ENCODE measurements at regions of chr3 and their contacts with region 1.

Region 1: DNA sequence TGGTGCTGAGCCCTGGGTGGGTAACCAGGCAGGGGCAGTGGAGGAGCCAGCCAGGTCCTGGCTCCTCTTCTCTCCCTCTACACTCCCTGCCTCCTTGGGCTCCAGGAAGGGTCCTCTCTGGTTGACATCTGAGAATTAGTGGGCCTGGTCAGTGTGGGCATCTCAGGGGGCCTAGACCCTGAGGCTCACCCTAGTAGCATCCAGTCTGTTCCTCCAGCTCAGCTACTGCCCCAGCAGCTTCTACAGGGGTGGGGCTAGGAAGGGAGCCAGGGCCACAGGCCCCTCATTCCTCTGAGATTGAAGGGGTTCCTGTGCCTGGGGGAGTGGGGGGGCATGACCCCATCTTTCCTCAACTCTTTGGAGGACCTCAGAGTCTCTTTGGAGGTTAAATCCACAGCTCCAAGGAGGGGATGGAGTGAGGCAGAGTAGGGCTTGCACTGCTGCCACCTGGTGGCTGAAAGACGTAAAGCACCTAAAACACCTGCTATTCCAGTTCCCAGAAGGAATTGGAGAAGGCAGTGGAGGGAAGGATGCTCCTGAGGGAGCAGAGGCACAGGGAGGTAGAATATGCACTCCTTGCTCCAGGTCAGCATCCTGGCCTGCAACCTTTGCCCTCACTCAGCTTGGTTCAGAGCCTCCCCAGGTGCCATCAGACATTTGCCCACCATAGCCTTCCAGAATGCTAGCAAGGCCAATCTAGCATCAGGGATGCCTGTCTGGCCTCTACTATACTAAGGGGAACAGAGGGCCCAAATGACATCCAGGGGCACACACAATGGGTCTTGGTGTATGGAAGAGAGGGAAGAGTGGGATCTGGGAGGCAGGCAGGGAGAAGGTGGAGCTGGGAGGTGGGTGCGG is 25.1 kb downstream of the C3orf18 start:
- DNase-seq: peak; percentile 54
- ATAC-seq: peak; percentile 71
- H3K4me3 Mint-ChIP-seq: no peak overlapping the region
- H3K27ac Mint-ChIP-seq: peak overlapping the region; percentile 41
- H3K4me1 Mint-ChIP-seq: no peaks in the 10 kb centered on the region
- H3K27me3 Mint-ChIP-seq: peaks cover 27% of the 10 kb centered on the region
- CTCF ChIP-seq: peak; percentile 90

Region 2: DNA sequence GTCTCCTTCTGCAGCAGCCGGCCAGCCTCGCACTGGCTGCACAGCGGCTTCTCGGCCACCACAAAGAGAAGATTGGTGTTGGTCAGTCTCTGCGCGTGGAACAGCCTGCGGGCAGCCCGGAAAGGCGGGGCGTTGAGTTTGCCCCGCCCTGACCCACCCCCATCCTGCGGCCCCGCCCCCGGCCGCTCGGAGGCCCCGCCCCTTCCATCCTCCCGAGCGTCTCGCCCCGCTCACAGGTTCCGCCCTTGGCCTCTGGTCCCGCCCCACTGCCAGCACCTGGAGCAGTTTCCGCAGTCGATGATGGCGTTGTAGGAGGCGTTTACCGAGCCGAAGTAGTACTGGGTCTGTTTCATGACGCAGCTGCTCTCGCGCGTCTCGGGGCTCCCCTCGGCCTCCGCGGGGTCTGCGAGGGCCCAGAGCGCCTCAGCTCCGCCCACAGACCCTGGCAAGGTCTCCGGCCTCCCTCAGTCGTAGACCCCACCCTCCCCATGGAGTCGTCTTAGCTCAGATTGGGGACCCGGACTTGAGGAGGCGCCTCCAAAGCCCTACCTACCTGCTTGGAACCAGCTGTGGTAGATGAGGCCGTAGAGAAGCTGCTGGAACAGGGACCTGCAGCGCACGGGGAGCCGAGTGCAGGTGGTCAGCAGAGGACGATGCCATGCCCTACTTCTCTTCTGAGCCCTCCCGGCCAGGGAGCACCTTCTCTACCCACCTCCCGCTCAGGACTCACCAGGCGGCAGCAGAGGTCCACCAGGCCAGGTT is 177.1 kb before region 1 on chr3:
- CTCF ChIA-PET with region 1: interaction called, 4 read pairs
- POLR2A ChIA-PET with region 1: no interaction called
- intact Hi-C with region 1: loop called (anchors 1 kb)
- DNase-seq: peak; percentile 85
- ATAC-seq: peak; percentile 97
- H3K4me3 Mint-ChIP-seq: peak overlapping the region; percentile 85
- H3K27ac Mint-ChIP-seq: peak overlapping the region; percentile 83
- H3K4me1 Mint-ChIP-seq: peaks cover 19% of the 10 kb centered on the region
- H3K27me3 Mint-ChIP-seq: peaks cover 2% of the 10 kb centered on the region
- CTCF ChIP-seq: no peak

Region 3: DNA sequence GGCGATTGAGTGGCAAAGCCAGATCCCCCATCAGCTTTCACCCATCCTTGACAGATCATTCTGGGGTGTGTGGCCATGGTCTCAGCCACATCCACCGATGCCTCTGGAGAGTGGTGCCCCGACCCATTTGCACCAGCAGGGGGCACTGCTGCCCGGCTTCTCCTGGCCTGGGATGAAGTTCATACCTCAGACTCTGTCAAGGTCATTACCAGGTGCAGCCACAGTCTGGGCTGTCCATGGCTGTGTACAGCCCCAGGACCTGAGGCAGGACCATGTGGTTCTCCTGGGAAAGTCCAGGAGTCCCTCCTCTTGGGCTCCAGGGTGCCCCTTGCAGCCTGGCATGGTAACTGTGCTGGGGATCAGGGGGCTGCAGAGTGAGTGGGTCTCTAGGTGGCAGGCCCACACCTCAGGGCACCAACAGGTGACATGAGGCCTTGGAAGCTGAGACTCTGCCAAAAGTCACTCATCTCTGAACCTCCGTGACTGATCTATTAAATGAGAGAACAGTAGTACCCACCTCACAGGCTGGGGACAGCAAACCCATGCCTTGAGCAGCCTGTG is 106.2 kb before region 1 on chr3:
- CTCF ChIA-PET with region 1: interaction called, 18 read pairs
- POLR2A ChIA-PET with region 1: no interaction called
- intact Hi-C with region 1: loop called (anchors 1 kb)
- DNase-seq: peak; percentile 64
- ATAC-seq: peak; percentile 86
- H3K4me3 Mint-ChIP-seq: no peak overlapping the region
- H3K27ac Mint-ChIP-seq: no peak overlapping the region
- H3K4me1 Mint-ChIP-seq: no peaks in the 10 kb centered on the region
- H3K27me3 Mint-ChIP-seq: peaks cover 4% of the 10 kb centered on the region
- CTCF ChIP-seq: no peak

Region 4: GRCh38 chr3:50494126-50494525 is 48.3 kb before region 1 on chr3:
- CTCF ChIA-PET with region 1: no interaction called
- POLR2A ChIA-PET with region 1: no interaction called
- intact Hi-C with region 1: no loop called
- DNase-seq: no peak
- ATAC-seq: no peak
- H3K4me3 Mint-ChIP-seq: no peak overlapping the region
- H3K27ac Mint-ChIP-seq: no peak overlapping the region
- H3K4me1 Mint-ChIP-seq: no peaks in the 10 kb centered on the region
- H3K27me3 Mint-ChIP-seq: peaks cover 17% of the 10 kb centered on the region
- CTCF ChIP-seq: no peak

Region 5: GRCh38 chr3:50519471-50520089 is 22.8 kb before region 1 on chr3:
- CTCF ChIA-PET with region 1: interaction called, 6 read pairs
- POLR2A ChIA-PET with region 1: no interaction called
- intact Hi-C with region 1: loop called (anchors 2 kb)
- DNase-seq: peak; percentile 52
- ATAC-seq: peak; percentile 38
- H3K4me3 Mint-ChIP-seq: no peak overlapping the region
- H3K27ac Mint-ChIP-seq: no peak overlapping the region
- H3K4me1 Mint-ChIP-seq: peaks cover 27% of the 10 kb centered on the region
- H3K27me3 Mint-ChIP-seq: peaks cover 3% of the 10 kb centered on the region
- CTCF ChIP-seq: no peak

Region 6: DNA sequence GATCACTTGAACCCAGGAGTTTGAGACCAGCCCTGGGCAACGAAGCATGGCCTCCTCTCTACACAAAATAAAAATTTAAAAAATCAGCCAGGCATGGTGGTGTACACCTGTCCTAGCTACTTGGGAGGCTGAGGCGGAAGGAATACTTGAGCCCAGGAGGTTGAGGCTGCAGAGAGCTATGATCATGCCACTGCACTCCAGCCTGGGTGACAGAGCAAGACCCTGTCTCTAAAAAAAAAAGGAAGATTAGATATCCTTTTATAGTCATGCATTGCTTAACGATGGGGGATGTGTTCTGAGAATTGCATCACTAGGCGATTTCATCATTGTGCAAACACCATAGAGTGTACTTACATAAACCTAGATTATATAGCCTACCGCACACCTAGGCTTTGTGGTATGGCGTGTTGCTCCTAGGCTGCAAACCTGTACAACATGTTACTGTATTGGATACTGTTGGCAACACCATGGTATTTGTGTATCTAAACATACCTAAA is 1668.2 kb after region 1 on chr3:
- CTCF ChIA-PET with region 1: no interaction called
- POLR2A ChIA-PET with region 1: no interaction called
- intact Hi-C with region 1: no loop called
- DNase-seq: no peak
- ATAC-seq: no peak
- H3K4me3 Mint-ChIP-seq: no peak overlapping the region
- H3K27ac Mint-ChIP-seq: no peak overlapping the region
- H3K4me1 Mint-ChIP-seq: peaks cover 2% of the 10 kb centered on the region
- H3K27me3 Mint-ChIP-seq: no peaks in the 10 kb centered on the region
- CTCF ChIP-seq: no peak